Activated CD8-positive, alpha-beta T cell treated with anti-CD3 and anti-CD28 coated beads, Interleukin-2, amount 10 ng/mL, durations not matched to agents 7 days and 5 days (primary cell): ENCODE measurements at regions of chr11 and their contacts with region 1.

Region 1: DNA sequence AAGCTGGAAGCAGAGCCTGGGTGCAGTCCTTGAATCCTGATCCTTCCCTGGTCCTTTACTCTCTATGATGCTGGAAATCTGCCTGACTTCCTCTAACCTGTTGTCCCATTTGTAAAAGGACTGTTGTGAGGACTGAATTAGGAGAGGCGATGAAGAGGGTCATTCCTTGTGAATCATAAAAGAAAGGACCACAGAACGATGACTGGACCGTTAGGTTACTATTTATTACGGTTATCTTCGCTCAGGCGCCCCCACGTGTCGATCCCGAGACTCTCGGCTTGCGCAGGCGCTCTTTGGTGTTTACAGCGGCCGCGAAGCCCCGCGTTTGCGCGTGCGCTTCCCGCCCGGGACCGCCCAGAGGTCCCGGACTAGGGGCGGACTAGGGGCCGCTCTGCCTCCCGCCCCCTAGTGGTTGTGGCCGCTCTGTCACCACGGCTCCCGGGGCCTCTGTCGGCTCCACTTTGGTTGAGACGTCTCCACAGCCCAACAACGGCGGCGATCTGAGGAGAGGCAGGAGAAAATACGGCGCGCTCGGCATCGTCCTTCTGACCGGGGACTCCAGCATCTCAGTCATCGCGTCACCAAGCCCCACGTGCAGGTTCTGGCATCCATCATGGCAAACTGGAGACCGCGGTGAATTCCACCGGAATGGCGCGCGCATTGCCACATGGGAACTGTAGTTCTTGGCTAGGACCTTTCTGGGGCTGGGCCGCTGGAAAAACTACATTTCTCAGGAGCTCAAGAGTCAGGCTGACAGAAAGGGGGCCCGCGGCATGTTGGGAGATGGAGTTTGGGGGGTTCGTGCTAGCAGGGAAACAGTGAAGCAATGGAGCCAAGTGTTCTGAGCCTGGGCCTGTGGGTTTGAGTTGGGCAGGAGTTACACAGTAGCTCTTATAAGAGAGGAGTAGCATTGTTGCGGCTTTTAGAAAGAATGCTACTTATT is at the start of gene STARD10:
- DNase-seq: peak; percentile 95
- ATAC-seq: peak; percentile 98
- H3K4me3 Mint-ChIP-seq: peak within 1 kb of the TSS; percentile 98
- H3K27ac Mint-ChIP-seq: peak within 1 kb of the TSS; percentile 100
- H3K4me1 Mint-ChIP-seq: peaks cover 28% of the 10 kb centered on the region
- H3K27me3 Mint-ChIP-seq: no peaks in the 10 kb centered on the region
- total RNA-seq, gene STARD10: 4.0 to 4.5 TPM

Region 2: DNA sequence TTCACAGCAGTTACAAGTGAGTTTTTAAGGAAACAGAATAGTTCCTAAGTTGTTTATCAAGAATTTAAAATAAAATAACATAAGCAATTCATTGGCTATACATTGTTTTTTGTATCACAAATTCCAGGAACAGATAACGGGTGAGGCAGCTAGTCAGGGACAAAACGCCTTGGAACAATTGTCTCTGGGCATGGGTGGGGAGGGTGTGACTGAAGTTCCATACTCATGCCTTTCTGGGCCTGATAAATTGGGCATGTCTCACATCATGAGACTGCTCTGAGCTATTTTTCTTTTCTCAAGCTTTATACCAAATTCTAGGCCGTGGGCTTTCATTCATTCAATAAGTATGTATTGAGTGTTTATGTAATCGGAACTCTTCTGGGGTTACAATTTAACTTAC is 636.6 kb before region 1 on chr11:
- CTCF ChIA-PET with region 1: no interaction called
- POLR2A ChIA-PET with region 1: no interaction called
- DNase-seq: no peak
- ATAC-seq: no peak
- H3K4me3 Mint-ChIP-seq: no peak overlapping the region
- H3K27ac Mint-ChIP-seq: no peak overlapping the region
- H3K4me1 Mint-ChIP-seq: no peaks in the 10 kb centered on the region
- H3K27me3 Mint-ChIP-seq: peaks cover 18% of the 10 kb centered on the region

Region 3: DNA sequence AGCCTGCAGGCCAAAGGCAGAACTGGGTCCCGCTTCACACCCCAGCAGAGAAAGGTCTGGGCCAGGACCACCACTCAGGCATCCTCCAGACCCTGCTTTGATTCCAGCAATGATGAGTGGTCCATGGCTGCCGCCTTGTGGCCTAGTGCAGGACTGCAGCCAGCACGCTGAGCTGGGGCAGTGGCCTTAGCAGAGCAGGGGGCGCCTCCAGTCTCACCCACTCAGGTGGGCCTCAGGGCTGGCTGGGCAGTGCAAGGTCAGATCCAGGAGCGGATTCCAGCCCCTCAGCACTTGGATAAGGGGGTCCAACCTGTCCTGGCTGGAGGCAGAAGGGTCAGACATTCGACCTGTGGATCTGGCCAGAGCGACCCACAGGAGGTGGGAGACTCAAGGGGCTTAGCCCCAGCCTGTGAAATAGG is 109.9 kb before region 1 on chr11:
- CTCF ChIA-PET with region 1: interaction called, 24 read pairs
- POLR2A ChIA-PET with region 1: no interaction called
- DNase-seq: peak; percentile 78
- ATAC-seq: peak; percentile 64
- H3K4me3 Mint-ChIP-seq: no peak overlapping the region
- H3K27ac Mint-ChIP-seq: no peak overlapping the region
- H3K4me1 Mint-ChIP-seq: peaks cover 44% of the 10 kb centered on the region
- H3K27me3 Mint-ChIP-seq: peaks cover 8% of the 10 kb centered on the region

Region 4: DNA sequence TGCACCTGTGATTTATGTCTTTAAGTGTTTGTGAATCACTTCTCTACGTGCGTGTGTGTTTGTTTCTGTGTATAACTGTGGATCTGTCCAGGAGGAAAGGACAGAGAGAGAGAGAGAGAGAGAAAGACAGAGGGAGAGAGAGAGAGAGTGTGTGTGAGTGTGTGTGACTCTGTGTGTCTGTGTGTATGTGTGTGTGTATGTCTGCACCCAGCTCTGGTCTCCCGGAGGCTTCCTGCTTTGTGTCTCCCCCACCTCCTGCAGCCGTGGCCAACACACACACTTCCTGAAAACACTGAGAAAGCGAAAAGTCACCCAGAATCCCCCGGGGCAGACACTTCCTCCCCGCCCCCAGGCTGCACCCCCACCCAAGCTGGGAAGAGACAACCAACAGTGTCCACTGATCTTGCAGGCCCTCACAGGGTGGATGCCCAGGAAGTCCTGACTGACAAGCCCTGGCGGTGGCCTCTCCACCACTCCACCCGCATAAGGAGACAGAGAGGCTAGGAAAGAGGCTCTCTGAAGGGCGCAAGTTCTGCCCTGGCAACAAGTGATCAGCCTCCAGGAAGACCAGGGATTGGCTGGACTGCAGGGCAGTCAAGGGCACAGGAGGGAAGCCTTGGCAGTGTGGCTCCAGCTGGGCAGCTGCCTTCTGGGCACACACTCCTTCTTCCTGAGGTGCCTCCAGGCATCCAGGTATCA is 71.5 kb before region 1 on chr11:
- CTCF ChIA-PET with region 1: interaction called, 202 read pairs
- POLR2A ChIA-PET with region 1: interaction called, 9 read pairs
- DNase-seq: peak; percentile 91
- ATAC-seq: peak; percentile 91
- H3K4me3 Mint-ChIP-seq: peak overlapping the region; percentile 85
- H3K27ac Mint-ChIP-seq: peak overlapping the region; percentile 90
- H3K4me1 Mint-ChIP-seq: peaks cover 58% of the 10 kb centered on the region
- H3K27me3 Mint-ChIP-seq: no peaks in the 10 kb centered on the region

Region 5: GRCh38 chr11:72736452-72737069 is 57.1 kb before region 1 on chr11:
- CTCF ChIA-PET with region 1: interaction called, 202 read pairs
- POLR2A ChIA-PET with region 1: interaction called, 3 read pairs
- DNase-seq: peak; percentile 84
- ATAC-seq: peak; percentile 85
- H3K4me3 Mint-ChIP-seq: peak overlapping the region; percentile 54
- H3K27ac Mint-ChIP-seq: peak overlapping the region; percentile 99
- H3K4me1 Mint-ChIP-seq: peaks cover 58% of the 10 kb centered on the region
- H3K27me3 Mint-ChIP-seq: no peaks in the 10 kb centered on the region

Region 6: GRCh38 chr11:72781313-72782050 is 12.2 kb before region 1 on chr11:
- CTCF ChIA-PET with region 1: interaction called, 31 read pairs
- POLR2A ChIA-PET with region 1: interaction called, 7 read pairs
- DNase-seq: peak; percentile 51
- ATAC-seq: peak; percentile 82
- H3K4me3 Mint-ChIP-seq: peak overlapping the region; percentile 67
- H3K27ac Mint-ChIP-seq: no peak overlapping the region
- H3K4me1 Mint-ChIP-seq: peaks cover 20% of the 10 kb centered on the region
- H3K27me3 Mint-ChIP-seq: peaks cover 13% of the 10 kb centered on the region

Region 7: GRCh38 chr11:72814286-72815109 is 20.8 kb after region 1 on chr11 and contains the start of gene ATG16L2:
- CTCF ChIA-PET with region 1: interaction called, 65 read pairs
- POLR2A ChIA-PET with region 1: interaction called, 21 read pairs
- DNase-seq: peak; percentile 88
- ATAC-seq: peak; percentile 74
- H3K4me3 Mint-ChIP-seq: peak within 1 kb of the TSS; percentile 100
- H3K27ac Mint-ChIP-seq: peak within 1 kb of the TSS; percentile 99
- H3K4me1 Mint-ChIP-seq: peaks cover 50% of the 10 kb centered on the region
- H3K27me3 Mint-ChIP-seq: no peaks in the 10 kb centered on the region
- total RNA-seq, gene ATG16L2: 104 to 105 TPM

Region 8: DNA sequence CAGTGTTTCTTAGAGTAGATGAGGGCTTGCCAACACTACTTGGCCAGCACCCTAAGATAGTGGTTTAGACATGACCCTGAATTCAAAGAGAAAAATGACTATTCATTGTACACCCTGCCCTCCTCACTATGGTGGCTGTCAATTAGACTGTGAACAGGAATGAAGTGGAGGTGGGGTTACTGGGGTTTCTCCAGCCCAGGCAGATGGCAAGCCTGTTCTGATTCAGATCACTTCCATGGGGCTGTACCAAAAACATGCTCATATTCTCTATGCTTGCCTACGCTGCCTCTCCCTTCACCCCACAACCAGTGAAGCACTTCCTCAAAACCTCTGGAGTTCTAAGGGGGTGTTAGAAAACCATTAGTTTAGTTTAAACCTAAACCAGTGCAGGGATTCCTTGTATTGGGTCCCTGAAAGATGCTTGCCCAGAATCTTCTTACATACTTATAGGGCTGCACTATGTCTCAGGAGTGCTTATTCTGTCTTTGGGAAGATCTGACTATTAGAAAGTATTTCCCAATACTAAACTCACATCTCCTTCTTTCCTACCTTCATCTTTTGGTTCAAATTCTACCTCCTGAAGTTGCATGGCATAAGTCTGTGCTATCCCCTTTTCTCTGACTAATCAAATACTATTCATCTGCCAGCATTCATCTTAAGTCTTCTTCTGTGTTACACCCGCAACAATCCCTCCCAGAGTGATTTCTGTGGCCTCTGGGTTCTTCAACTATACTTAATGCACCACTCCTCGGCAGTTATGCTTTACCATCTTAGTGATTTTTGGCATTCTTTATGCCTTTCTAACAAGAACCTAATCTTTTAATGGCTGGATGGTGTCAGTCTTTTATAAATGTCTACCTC is 92.3 kb after region 1 on chr11:
- CTCF ChIA-PET with region 1: no interaction called
- POLR2A ChIA-PET with region 1: no interaction called
- DNase-seq: no peak
- ATAC-seq: no peak
- H3K4me3 Mint-ChIP-seq: no peak overlapping the region
- H3K27ac Mint-ChIP-seq: no peak overlapping the region
- H3K4me1 Mint-ChIP-seq: no peaks in the 10 kb centered on the region
- H3K27me3 Mint-ChIP-seq: no peaks in the 10 kb centered on the region